Activated CD4-positive, alpha-beta T cell treated with anti-CD3 and anti-CD28 coated beads for 36 hours (primary cell): ENCODE measurements at regions of chr1 and their contacts with region 1.

Region 1: DNA sequence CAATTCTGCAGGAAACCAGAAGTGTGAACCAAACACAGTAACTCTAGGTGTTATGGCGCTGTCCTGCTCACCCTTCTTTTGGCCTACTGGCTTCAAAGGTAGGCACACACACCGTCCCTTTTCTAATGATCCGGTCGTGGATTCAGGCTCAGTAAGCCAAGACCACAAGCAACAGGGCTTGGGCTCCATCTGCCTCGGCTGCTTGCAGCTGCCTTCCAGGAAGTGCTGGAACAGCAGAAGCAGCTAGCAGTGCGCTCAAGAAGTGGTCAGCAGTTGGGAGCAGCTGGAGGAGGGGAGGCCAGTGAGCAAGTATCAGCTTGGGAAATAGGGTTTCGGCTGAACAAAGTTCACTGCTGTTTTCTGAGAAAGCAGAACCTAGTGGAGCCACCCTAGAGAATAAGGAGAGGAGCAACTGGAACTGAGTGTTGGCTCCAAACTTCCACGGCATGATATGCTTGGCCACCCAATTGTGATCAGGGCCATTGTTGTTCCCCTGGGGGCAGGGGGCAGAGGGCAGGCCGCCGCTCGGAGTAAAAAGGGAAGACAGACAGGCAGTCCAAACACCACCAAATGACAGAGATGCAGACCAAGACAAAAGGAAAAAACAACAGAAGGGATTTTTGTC is 173.4 kb downstream of the TOMM20 start:
- DNase-seq: peak; percentile 28
- ATAC-seq: peak; percentile 27
- H3K4me3 Mint-ChIP-seq: no peak overlapping the region
- H3K27ac Mint-ChIP-seq: peak overlapping the region; percentile 91
- H3K4me1 Mint-ChIP-seq: peaks cover 64% of the 10 kb centered on the region
- H3K27me3 Mint-ChIP-seq: no peaks in the 10 kb centered on the region

Region 2: DNA sequence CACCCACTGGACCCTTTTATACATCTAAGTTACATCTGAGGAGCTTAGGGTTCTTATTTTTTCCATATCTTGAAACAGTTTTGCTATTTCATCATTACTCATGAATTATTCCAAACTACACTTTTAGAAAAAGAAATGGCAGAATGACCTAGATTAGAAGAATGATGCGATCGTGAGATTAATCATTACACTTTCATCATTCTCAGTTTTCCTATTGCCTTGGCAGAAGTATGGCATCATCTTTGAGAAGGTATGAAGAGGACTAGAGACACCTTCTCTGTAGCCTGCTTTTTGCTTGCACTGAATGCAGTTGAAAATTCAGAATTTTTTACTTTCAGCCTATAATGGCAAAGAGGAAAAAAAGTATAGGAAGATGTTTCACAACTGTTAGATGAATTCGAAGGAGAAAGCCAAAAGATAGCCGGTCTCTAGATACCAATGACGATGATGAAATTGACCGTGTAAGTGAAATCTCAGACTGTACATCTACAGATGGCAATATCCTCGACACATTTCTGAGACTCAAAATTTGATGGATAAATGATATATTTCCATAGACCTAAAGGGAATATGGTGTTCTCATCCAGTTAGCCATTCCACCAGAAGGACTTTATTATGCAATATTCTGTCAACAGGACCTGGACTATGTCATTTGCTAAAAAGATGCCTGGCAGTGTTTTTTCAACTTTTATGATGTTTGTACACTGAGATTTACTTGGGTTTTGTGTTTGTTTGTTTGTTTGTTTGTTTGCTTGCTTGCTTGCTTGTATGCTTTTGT is 18.4 kb before region 1 on chr1:
- CTCF ChIA-PET with region 1: interaction called, 5 read pairs
- POLR2A ChIA-PET with region 1: no interaction called
- intact Hi-C with region 1: loop called in 1 of 2 experiments (anchors 2 kb)
- DNase-seq: no peak
- ATAC-seq: peak; percentile 63
- H3K4me3 Mint-ChIP-seq: no peak overlapping the region
- H3K27ac Mint-ChIP-seq: peak overlapping the region; percentile 70
- H3K4me1 Mint-ChIP-seq: peaks cover 48% of the 10 kb centered on the region
- H3K27me3 Mint-ChIP-seq: no peaks in the 10 kb centered on the region

Region 3: DNA sequence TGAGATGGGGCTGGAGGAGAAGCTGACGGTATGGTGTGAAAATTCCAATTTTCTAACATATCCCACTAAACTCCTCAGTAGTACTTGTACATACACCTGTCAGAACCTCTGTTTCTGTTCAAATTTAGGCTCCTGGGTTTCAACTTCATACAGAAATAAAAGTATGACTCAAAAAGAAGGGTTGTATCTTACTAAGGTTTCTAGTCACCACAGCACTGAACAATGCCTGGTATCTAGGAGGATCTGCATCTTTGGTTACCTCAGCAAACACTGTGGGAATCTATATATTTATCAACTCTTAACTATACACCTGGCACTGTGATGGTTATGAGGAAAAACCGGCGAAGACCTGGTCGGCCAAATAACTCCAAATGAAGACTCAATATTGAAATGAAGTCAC is 192.1 kb after region 1 on chr1:
- CTCF ChIA-PET with region 1: no interaction called
- POLR2A ChIA-PET with region 1: no interaction called
- intact Hi-C with region 1: no loop called
- DNase-seq: no peak
- ATAC-seq: peak; percentile 87
- H3K4me3 Mint-ChIP-seq: no peak overlapping the region
- H3K27ac Mint-ChIP-seq: no peak overlapping the region
- H3K4me1 Mint-ChIP-seq: peaks cover 25% of the 10 kb centered on the region
- H3K27me3 Mint-ChIP-seq: no peaks in the 10 kb centered on the region